ENCODE measurements at regions of chr10 and their contacts with region 1.

Region 1: DNA sequence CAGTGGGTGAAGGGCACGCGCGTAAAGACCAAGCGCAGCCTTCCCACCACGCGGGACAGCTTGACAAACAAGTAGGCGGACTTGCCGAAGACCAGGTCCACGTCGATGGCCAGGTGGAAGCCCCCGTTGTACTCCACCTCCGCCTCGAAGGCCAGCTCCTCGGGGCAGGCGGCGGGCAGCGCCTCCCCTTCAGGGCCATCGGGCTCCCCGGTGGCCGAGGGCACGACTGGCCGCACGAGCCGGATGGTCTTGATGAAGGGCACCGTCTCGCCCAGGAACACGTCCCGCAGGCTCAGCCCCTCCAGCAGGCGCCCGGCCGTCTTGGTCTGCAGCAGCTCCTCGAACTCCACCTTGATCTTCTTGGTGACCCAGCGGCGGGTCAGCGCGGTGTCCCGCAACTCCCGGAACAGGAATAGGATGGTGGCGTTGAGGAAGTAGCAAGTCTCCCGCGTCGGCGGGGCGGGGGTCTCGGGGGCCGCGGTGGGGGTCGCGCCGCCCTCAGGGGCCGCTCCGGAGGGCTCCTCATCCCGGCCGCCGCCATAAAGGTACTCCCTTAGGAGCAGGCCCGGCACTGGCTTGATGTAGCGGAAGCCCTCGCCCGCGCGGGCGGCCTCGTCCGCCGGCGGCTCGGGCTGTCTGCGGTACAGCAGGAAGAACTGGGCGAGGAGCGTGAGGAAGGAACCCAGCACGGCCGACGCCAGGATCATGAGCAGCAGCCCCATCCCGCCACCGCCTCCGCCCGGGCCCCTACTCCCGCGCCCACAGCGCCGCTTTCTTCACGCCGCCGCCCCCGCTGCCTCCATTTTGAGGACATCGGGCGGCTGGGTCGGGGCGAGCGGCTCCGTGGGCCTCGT is 507 bp downstream of the PDZD8 start:
- DNase-seq: no peak
- ATAC-seq: peak; percentile 47
- H3K4me3 ChIP-seq: peak overlapping the region; percentile 65 to 94 (median 90)
- H3K27ac ChIP-seq: peak overlapping the region; percentile 74
- H3K4me1 ChIP-seq: peaks cover 39% of the 10 kb centered on the region
- H3K27me3 ChIP-seq: no peaks in the 10 kb centered on the region; a peak in 1 of 5 replicates
- CTCF ChIP-seq: peak; percentile 3; the same call in 1 of the 2 replicates
- EP300 ChIP-seq: no peak
- POLR2A ChIP-seq: no peak
- RAD21 ChIP-seq: no peak

Region 2: DNA sequence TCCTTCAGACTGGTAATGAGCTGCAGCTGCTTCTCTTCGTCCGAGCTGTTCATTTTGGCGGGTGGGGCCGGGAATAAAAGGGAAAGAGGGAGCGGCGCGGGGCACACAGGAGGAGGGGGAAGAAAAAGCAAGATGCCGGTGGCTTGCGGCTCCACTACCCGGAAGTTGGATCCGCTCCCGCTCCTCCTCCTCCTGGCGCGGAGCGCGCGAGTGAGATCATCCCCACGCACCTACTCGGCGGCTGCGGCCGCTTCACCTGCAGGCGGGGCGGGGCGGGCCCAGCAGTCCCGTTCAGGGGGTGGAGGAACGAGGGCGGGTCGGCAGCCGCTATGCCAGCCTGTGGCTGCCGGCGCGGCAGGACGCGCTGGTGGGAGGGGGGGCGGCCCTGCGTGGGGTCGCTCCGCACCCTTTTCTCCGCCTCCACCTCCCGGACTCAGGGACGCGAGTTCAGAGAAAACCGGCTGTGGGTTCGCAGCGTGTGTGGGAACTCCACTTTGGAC is 369.7 kb before region 1 on chr10 and contains the start of gene SHTN1:
- CTCF ChIA-PET with region 1: no interaction called
- POLR2A ChIA-PET with region 1: no interaction called
- in situ Hi-C with region 1: no loop called
- intact Hi-C with region 1: no loop called
- DNase-seq: peak; percentile 70
- ATAC-seq: peak; percentile 89
- H3K4me3 ChIP-seq: peak within 1 kb of the TSS; percentile 78 to 86 (median 82)
- H3K27ac ChIP-seq: peak within 1 kb of the TSS; percentile 83
- H3K4me1 ChIP-seq: peaks cover 52% of the 10 kb centered on the region
- H3K27me3 ChIP-seq: no peaks in the 10 kb centered on the region
- CTCF ChIP-seq: no peak
- EP300 ChIP-seq: no peak
- POLR2A ChIP-seq: peak; percentile 57 to 70
- RAD21 ChIP-seq: no peak
- total RNA-seq, gene SHTN1: 15.6 and 18.5 TPM in 2 replicates

Region 3: GRCh38 chr10:117391436-117392205 is 16.9 kb after region 1 on chr10:
- CTCF ChIA-PET with region 1: no interaction called
- POLR2A ChIA-PET with region 1: no interaction called
- in situ Hi-C with region 1: no loop called
- intact Hi-C with region 1: no loop called
- DNase-seq: peak; percentile 68
- ATAC-seq: peak; percentile 98
- H3K4me3 ChIP-seq: no peak overlapping the region
- H3K27ac ChIP-seq: no peak overlapping the region
- H3K4me1 ChIP-seq: peaks cover 21% of the 10 kb centered on the region
- H3K27me3 ChIP-seq: no peaks in the 10 kb centered on the region; a peak in 1 of 5 replicates
- CTCF ChIP-seq: no peak
- EP300 ChIP-seq: 0 out of 4 replicates have a peak, but pooled peaks of 1 of the 2 experiments have one; percentile 18
- POLR2A ChIP-seq: no peak
- RAD21 ChIP-seq: no peak

Region 4: DNA sequence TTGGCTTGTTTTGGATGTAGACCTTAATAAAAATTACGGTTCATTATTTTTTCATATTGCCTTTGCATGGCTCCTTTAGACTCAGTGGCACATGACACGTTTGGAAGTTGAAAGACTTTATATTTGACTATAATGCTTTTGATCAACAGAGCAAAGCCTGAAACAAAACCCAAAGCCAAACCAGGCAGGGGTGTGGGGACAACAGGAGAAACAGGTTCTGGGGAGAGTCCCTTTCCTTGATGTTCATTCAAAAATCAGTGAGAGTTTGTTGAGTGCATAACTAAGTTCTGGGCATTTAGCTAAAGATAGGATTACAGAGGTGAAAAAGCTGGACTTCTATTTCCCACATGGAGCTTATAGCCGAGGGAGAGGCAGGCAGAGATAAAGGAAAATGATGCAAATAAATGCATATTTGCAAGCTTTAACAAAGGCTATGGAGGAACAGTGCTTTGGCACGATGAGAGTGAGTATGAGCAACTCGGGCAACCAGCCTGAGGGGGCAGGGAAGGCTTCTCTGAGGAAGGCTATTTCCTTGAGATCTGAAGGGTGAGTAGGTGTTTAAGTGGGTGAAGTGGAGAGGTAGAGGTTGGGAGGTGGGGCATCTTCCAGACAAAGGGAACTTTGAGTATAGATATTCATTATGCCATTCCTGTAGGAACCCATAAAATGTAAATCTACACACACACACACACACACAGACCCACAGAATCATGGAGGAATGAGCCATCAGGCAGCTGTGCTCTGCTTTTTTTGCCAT is 35.0 kb after region 1 on chr10:
- CTCF ChIA-PET with region 1: no interaction called
- POLR2A ChIA-PET with region 1: interaction called, 3 read pairs
- in situ Hi-C with region 1: no loop called
- intact Hi-C with region 1: loop called (anchors 5 kb)
- DNase-seq: no peak
- ATAC-seq: no peak
- H3K4me3 ChIP-seq: no peak overlapping the region
- H3K27ac ChIP-seq: no peak overlapping the region
- H3K4me1 ChIP-seq: peaks cover 56% of the 10 kb centered on the region
- H3K27me3 ChIP-seq: no peaks in the 10 kb centered on the region
- CTCF ChIP-seq: no peak
- EP300 ChIP-seq: no peak
- POLR2A ChIP-seq: no peak
- RAD21 ChIP-seq: no peak